Transverse colon (tissue), 4 donors: ENCODE measurements at regions of chr3 and their contacts with region 1.

Region 1: GRCh38 chr3:69890084-69890483 is 109.4 kb upstream of the SAMMSON start:
- DNase-seq: no peak
- H3K4me3 ChIP-seq: no peak overlapping the region
- H3K27ac ChIP-seq: no peak overlapping the region
- H3K4me1 ChIP-seq: no peaks in the 10 kb centered on the region
- H3K27me3 ChIP-seq: no peaks in the 10 kb centered on the region
- CTCF ChIP-seq: no peak
- EP300 ChIP-seq: no peak
- POLR2A ChIP-seq: no peak

Region 2: DNA sequence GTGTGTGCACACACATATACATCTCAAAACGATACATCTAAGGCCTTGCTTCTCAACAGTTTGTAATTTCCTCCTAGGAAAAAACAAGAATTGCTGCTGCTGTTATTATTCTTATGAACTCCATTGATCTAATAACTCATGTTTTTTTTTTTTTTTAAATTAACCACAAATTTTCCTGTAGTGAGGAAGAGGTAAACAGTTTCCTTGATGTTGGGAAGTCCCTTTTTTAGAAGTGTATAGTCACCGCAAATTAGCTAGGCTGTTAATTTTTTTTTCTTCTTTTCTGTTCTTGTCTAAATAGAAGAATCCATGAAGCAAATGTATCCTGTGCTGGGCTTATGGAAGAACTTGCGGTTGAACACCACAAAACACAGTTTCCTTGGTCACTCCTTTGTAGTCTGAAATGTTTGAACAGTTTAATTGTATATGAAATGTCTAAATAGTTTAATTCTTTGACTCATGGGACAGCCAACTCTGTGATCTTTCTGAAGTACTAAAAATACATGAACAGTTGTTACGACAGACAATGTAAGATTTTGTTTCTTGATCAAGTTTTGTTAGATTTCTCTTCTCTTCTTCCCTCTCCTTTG is 86.3 kb before region 1 on chr3:
- in situ Hi-C with region 1: no loop called
- intact Hi-C with region 1: loop called (anchors 1 kb)
- DNase-seq: no peak
- H3K4me3 ChIP-seq: no peak overlapping the region
- H3K27ac ChIP-seq: no peak overlapping the region
- H3K4me1 ChIP-seq: peaks cover 0 to 20% (median 4%) of the 10 kb centered on the region in 4 donors
- H3K27me3 ChIP-seq: no peaks in the 10 kb centered on the region
- CTCF ChIP-seq: no peak
- EP300 ChIP-seq: no peak
- POLR2A ChIP-seq: no peak

Region 3: GRCh38 chr3:70108072-70108471 is 218.0 kb after region 1 on chr3:
- in situ Hi-C with region 1: no loop called
- intact Hi-C with region 1: no loop called
- DNase-seq: no peak
- H3K4me3 ChIP-seq: no peak overlapping the region
- H3K27ac ChIP-seq: no peak overlapping the region
- H3K4me1 ChIP-seq: no peaks in the 10 kb centered on the region
- H3K27me3 ChIP-seq: no peaks in the 10 kb centered on the region
- CTCF ChIP-seq: peak in 3 of 5 experiments; percentile 22 to 37 (median 31)
- EP300 ChIP-seq: no peak
- POLR2A ChIP-seq: no peak

Region 4: GRCh38 chr3:70201975-70202374 is 311.9 kb after region 1 on chr3:
- in situ Hi-C with region 1: no loop called
- intact Hi-C with region 1: no loop called
- DNase-seq: no peak
- H3K4me3 ChIP-seq: no peak overlapping the region
- H3K27ac ChIP-seq: no peak overlapping the region
- H3K4me1 ChIP-seq: no peaks in the 10 kb centered on the region
- H3K27me3 ChIP-seq: no peaks in the 10 kb centered on the region
- CTCF ChIP-seq: no peak
- EP300 ChIP-seq: no peak
- POLR2A ChIP-seq: no peak